CD4-positive, alpha-beta T cell (primary cell): ENCODE measurements at regions of chr19 and their contacts with region 1.

Region 1: DNA sequence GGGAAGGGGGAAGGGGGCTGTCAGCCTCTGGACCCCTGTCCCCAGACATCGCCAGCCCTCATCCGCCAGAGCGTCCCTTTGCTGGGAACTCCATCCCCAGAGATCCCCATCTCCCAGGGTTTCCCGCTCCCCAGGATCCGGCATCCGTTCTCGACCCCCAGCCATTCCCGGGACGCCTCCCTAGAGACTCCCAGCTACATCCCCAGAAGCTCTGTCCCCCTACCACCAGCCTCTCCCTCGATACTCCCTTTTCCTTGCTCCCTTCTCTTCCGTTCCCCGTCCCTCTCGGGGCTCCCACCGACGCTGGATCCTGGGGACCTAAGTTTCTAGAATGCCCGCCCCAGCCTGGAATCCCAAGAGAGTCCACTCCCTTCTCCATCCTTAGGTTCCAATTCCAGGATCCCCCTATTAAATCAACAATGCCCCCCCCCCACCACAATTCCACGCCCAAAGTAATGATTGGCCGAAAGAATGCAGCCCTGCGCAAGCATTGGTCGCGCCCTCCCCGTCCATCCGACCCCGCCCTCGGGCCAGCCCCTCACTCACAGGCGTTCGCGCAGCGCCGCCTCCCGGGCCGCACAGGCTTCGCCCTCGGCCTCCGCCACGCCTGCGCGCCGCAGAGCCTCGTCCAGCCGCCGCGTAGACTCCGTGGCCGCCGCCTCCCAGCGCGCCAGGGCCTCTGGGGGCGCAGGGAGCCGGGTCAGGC is 3.2 kb downstream of the CCDC194 start:
- DNase-seq: peak; percentile 83 to 95 (median 87)
- ATAC-seq: peak; percentile 99
- H3K4me3 ChIP-seq: peak overlapping the region; percentile 74
- H3K4me3 Mint-ChIP-seq: peak overlapping the region; percentile 93
- H3K27ac ChIP-seq: no peak overlapping the region
- H3K27ac Mint-ChIP-seq: no peak overlapping the region
- H3K4me1 ChIP-seq: peaks cover 32% of the 10 kb centered on the region
- H3K4me1 Mint-ChIP-seq: peaks cover 23% of the 10 kb centered on the region
- H3K27me3 ChIP-seq: no peaks in the 10 kb centered on the region
- H3K27me3 Mint-ChIP-seq: no peaks in the 10 kb centered on the region
- CTCF ChIP-seq: peak; percentile 67

Region 2: GRCh38 chr19:17266975-17267788 is 123.6 kb before region 1 on chr19 and contains the start of gene BABAM1:
- CTCF ChIA-PET with region 1: interaction called, 3 read pairs
- POLR2A ChIA-PET with region 1: no interaction called
- intact Hi-C with region 1: loop called in 1 of 2 experiments (anchors 10 kb)
- DNase-seq: peak; percentile 85 to 99 (median 92)
- ATAC-seq: peak; percentile 94
- H3K4me3 ChIP-seq: peak within 1 kb of the TSS; percentile 84
- H3K4me3 Mint-ChIP-seq: peak within 1 kb of the TSS; percentile 83
- H3K27ac ChIP-seq: peak within 1 kb of the TSS; percentile 47 to 63
- H3K27ac Mint-ChIP-seq: peak within 1 kb of the TSS; percentile 69
- H3K4me1 ChIP-seq: peaks cover 39% of the 10 kb centered on the region
- H3K4me1 Mint-ChIP-seq: peaks cover 15% of the 10 kb centered on the region
- H3K27me3 ChIP-seq: no peaks in the 10 kb centered on the region
- H3K27me3 Mint-ChIP-seq: no peaks in the 10 kb centered on the region
- CTCF ChIP-seq: no peak
- total RNA-seq, gene BABAM1: 56.2 to 63.5 TPM

Region 3: GRCh38 chr19:17346109-17346671 is 44.6 kb before region 1 on chr19:
- CTCF ChIA-PET with region 1: no interaction called
- POLR2A ChIA-PET with region 1: no interaction called
- intact Hi-C with region 1: loop called (anchors 1 kb)
- DNase-seq: peak; percentile 52 to 87 (median 72)
- ATAC-seq: peak; percentile 98
- H3K4me3 ChIP-seq: no peak overlapping the region
- H3K4me3 Mint-ChIP-seq: peak overlapping the region; percentile 34
- H3K27ac ChIP-seq: no peak overlapping the region
- H3K27ac Mint-ChIP-seq: no peak overlapping the region
- H3K4me1 ChIP-seq: peaks cover 10% of the 10 kb centered on the region
- H3K4me1 Mint-ChIP-seq: peaks cover 5% of the 10 kb centered on the region
- H3K27me3 ChIP-seq: peaks cover 2 to 18% of the 10 kb centered on the region in 2 experiments
- H3K27me3 Mint-ChIP-seq: peaks cover 37% of the 10 kb centered on the region
- CTCF ChIP-seq: peak; percentile 97

Region 4: GRCh38 chr19:17455308-17456123 is 64.7 kb after region 1 on chr19:
- CTCF ChIA-PET with region 1: no interaction called
- POLR2A ChIA-PET with region 1: no interaction called
- intact Hi-C with region 1: no loop called
- DNase-seq: peak in 1 of 14 experiments; percentile 22
- ATAC-seq: no peak
- H3K4me3 ChIP-seq: no peak overlapping the region
- H3K4me3 Mint-ChIP-seq: no peak overlapping the region
- H3K27ac ChIP-seq: no peak overlapping the region
- H3K27ac Mint-ChIP-seq: no peak overlapping the region
- H3K4me1 ChIP-seq: peaks cover 16% of the 10 kb centered on the region
- H3K4me1 Mint-ChIP-seq: peaks cover 15% of the 10 kb centered on the region
- H3K27me3 ChIP-seq: peaks cover 28 to 34% of the 10 kb centered on the region in 2 experiments
- H3K27me3 Mint-ChIP-seq: peaks cover 65% of the 10 kb centered on the region
- CTCF ChIP-seq: no peak

Region 5: DNA sequence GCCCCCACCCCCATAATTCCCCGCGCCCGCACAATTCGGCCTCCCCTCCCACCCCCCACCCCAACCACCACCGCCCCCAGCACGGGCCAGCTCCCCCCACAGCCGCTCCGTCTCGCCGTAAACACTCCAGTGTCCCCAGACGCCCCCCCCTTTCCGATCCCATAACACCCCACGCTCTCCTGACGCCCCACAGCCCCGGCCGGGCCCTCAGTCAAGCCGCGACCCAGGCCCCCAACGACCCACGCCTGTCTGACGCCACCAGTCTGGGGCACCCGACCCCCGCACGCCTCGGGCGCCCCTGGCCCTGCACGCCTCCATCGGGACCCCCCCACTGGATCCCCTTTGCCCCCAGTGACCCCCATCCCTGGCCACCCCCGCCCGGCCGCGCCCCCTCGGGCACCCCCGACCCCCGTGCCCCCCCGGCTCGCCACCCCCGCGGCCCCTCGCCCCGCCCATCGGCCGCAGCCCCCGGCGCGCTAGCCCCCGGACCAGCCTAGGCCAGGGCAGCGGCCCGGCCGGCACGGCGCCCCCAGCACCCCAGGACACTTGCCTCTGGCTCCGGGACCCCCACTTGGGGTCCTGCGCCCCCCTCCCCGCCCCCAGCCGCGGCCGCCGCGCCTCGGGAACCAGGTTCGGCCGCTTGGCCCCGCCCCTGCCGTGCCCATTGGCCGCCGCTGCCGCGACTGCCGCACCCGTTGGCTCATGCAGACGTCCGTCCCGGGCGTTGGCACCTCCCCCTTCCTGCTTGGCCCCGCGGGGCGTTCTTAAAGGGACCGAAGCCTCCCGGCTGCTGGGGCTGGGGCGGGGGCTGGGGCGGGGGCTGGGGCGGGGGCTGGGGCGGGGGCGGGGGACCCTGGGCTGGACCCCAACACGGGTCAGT is 1152.4 kb after region 1 on chr19 and contains the start of gene FKBP8:
- CTCF ChIA-PET with region 1: no interaction called
- POLR2A ChIA-PET with region 1: no interaction called
- intact Hi-C with region 1: no loop called
- DNase-seq: peak; percentile 89 to 97 (median 94)
- ATAC-seq: peak; percentile 93
- H3K4me3 ChIP-seq: peak within 1 kb of the TSS; percentile 63
- H3K4me3 Mint-ChIP-seq: peak within 1 kb of the TSS; percentile 98
- H3K27ac ChIP-seq: peak within 1 kb of the TSS; percentile 66 to 85
- H3K27ac Mint-ChIP-seq: peak within 1 kb of the TSS; percentile 96
- H3K4me1 ChIP-seq: peaks cover 28% of the 10 kb centered on the region
- H3K4me1 Mint-ChIP-seq: peaks cover 27% of the 10 kb centered on the region
- H3K27me3 ChIP-seq: no peaks in the 10 kb centered on the region
- H3K27me3 Mint-ChIP-seq: no peaks in the 10 kb centered on the region
- CTCF ChIP-seq: no peak
- total RNA-seq, gene FKBP8: 147 to 152 TPM